Activated naive CD4-positive, alpha-beta T cell treated with anti-CD3 and anti-CD28 coated beads for 36 hours (primary cell): ENCODE measurements at regions of chr2 and their contacts with region 1.

Region 1: DNA sequence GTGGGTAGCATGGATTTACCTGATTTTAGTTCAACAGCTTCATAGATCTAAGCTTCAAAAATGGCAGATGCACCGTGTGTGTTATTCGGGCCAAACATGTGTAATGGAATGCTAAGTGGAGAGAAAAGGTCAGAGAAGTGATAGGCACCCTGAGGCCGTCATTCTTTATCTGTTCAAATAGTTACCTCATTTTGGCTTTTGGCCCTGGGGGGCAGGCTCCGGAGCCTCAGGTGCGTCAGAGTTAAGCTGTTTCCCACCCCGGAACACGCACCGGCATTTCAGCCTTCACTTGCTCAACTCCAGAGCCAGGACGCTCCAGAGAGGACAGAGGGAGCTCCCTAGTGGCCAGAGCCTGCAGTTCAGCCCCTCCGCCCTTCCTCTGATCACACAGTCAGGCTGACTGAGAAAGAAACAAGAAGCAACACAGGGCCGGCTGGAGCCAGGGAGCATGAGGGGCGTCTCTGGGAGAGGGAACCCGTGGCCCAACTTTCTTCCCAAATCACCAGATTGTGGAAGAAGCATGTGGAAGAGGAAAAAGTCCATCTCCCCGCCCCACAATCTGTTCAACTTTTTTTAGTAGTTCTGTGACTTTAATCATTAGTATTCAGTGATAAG is 135.2 kb upstream of the EPC2 start:
- DNase-seq: peak; percentile 97
- H3K4me3 Mint-ChIP-seq: peak overlapping the region; percentile 60
- H3K27ac Mint-ChIP-seq: peak overlapping the region; percentile 70
- H3K4me1 Mint-ChIP-seq: peaks cover 29% of the 10 kb centered on the region
- H3K27me3 Mint-ChIP-seq: no peaks in the 10 kb centered on the region

Region 2: GRCh38 chr2:147989809-147990403 is 519.5 kb before region 1 on chr2:
- CTCF ChIA-PET with region 1: interaction called, 25 read pairs
- intact Hi-C with region 1: loop called (anchors 1 kb)
- DNase-seq: peak; percentile 40
- H3K4me3 Mint-ChIP-seq: no peak overlapping the region
- H3K27ac Mint-ChIP-seq: no peak overlapping the region
- H3K4me1 Mint-ChIP-seq: peaks cover 20% of the 10 kb centered on the region
- H3K27me3 Mint-ChIP-seq: no peaks in the 10 kb centered on the region

Region 3: DNA sequence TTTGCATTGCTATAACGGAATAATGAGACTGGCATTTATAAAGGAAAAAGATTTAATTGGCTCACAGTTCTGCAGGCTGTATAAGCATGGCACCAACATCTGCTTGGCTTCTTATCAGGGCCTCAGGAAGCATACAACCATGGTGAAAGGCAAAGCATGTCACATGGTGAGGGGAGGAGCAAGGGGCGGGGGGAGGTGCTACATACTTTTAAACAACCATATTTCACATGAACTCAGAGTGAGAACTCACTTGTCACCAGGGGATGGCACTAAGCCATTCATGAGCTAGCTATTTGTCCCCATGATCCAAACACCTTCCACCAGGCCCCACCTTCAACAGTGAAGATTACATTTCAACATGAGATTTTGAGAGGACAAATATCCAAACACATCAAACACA is 299.8 kb before region 1 on chr2:
- CTCF ChIA-PET with region 1: no interaction called
- intact Hi-C with region 1: loop called (anchors 1 kb)
- DNase-seq: peak; percentile 38
- H3K4me3 Mint-ChIP-seq: no peak overlapping the region
- H3K27ac Mint-ChIP-seq: no peak overlapping the region
- H3K4me1 Mint-ChIP-seq: no peaks in the 10 kb centered on the region
- H3K27me3 Mint-ChIP-seq: no peaks in the 10 kb centered on the region

Region 4: GRCh38 chr2:148493822-148494563 is 15.4 kb before region 1 on chr2:
- CTCF ChIA-PET with region 1: interaction called, 12 read pairs
- intact Hi-C with region 1: no loop called
- DNase-seq: no peak
- H3K4me3 Mint-ChIP-seq: no peak overlapping the region
- H3K27ac Mint-ChIP-seq: no peak overlapping the region
- H3K4me1 Mint-ChIP-seq: peaks cover 13% of the 10 kb centered on the region
- H3K27me3 Mint-ChIP-seq: no peaks in the 10 kb centered on the region

Region 5: DNA sequence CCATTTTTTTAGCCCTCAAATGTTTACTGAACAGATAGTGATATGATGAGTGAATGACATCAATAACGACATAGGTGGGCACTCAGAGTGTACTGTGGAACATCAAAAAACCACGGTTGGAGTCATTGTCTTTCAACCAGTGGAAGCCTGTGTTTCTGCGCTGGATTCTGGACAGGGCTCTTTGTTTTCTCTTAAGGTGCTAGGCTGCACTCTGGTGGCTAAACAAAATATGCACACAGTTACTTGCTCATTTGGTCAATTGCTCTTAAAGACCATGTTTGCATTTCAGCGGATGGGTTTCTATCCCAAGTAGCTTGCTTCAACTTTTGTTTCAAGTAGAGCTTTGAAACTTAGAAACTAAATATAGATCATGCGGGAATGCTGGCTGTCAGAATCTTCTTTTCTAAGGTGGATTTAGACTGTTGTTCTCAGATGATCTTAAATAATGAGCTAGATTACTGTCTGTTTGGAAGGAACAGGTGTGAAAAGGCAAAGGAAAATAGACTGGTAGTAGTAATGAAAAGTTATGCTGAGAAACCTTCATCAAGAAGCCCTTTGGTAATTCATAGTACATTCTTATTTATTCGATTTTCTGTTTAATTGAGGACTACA is 480.6 kb after region 1 on chr2:
- CTCF ChIA-PET with region 1: interaction called, 4 read pairs
- intact Hi-C with region 1: loop called (anchors 1 kb)
- DNase-seq: peak; percentile 70
- H3K4me3 Mint-ChIP-seq: no peak overlapping the region
- H3K27ac Mint-ChIP-seq: no peak overlapping the region
- H3K4me1 Mint-ChIP-seq: no peaks in the 10 kb centered on the region
- H3K27me3 Mint-ChIP-seq: no peaks in the 10 kb centered on the region